Activated CD8-positive, alpha-beta memory T cell treated with anti-CD3 and anti-CD28 coated beads, Interleukin-2, amount 10 ng/mL, durations not matched to agents 7 days and 5 days (primary cell): ENCODE measurements at regions of chr11 and their contacts with region 1.

Region 1: GRCh38 chr11:67391304-67392132 is at the start of gene RAD9A:
- DNase-seq: peak; percentile 97
- ATAC-seq: peak; percentile 88
- H3K4me3 Mint-ChIP-seq: peak within 1 kb of the TSS; percentile 95
- H3K27ac Mint-ChIP-seq: peak within 1 kb of the TSS; percentile 80
- H3K4me1 Mint-ChIP-seq: peaks cover 40% of the 10 kb centered on the region
- H3K27me3 Mint-ChIP-seq: no peaks in the 10 kb centered on the region
- total RNA-seq, gene RAD9A: 49.6 to 80.5 TPM

Region 2: GRCh38 chr11:67045341-67045764 is 346.2 kb before region 1 on chr11:
- CTCF ChIA-PET with region 1: no interaction called
- DNase-seq: no peak
- ATAC-seq: no peak
- H3K4me3 Mint-ChIP-seq: no peak overlapping the region
- H3K27ac Mint-ChIP-seq: no peak overlapping the region
- H3K4me1 Mint-ChIP-seq: no peaks in the 10 kb centered on the region
- H3K27me3 Mint-ChIP-seq: peaks cover 22% of the 10 kb centered on the region

Region 3: GRCh38 chr11:67468835-67469811 is 77.6 kb after region 1 on chr11 and contains the start of gene TMEM134:
- CTCF ChIA-PET with region 1: interaction called, 20 read pairs
- DNase-seq: peak; percentile 95
- ATAC-seq: peak; percentile 86
- H3K4me3 Mint-ChIP-seq: peak within 1 kb of the TSS; percentile 83
- H3K27ac Mint-ChIP-seq: peak within 1 kb of the TSS; percentile 82
- H3K4me1 Mint-ChIP-seq: peaks cover 30% of the 10 kb centered on the region
- H3K27me3 Mint-ChIP-seq: no peaks in the 10 kb centered on the region
- total RNA-seq, gene TMEM134: 32.8 to 41.9 TPM